CD8-positive, alpha-beta T cell (primary cell): ENCODE measurements at regions of chr1 and their contacts with region 1.

Region 1: GRCh38 chr1:223845810-223846682 is at the start of gene TP53BP2:
- DNase-seq: peak; percentile 66 to 93 (median 86)
- ATAC-seq: peak; percentile 83
- H3K4me3 ChIP-seq: peak within 1 kb of the TSS; percentile 77 to 87
- H3K4me3 Mint-ChIP-seq: peak within 1 kb of the TSS; percentile 93
- H3K27ac ChIP-seq: peak within 1 kb of the TSS; percentile 87 to 92
- H3K27ac Mint-ChIP-seq: peak within 1 kb of the TSS; percentile 95
- H3K4me1 ChIP-seq: peaks cover 28% of the 10 kb centered on the region
- H3K4me1 Mint-ChIP-seq: peaks cover 29% of the 10 kb centered on the region
- H3K27me3 ChIP-seq: no peaks in the 10 kb centered on the region
- H3K27me3 Mint-ChIP-seq: no peaks in the 10 kb centered on the region
- CTCF ChIP-seq: peak; percentile 33
- total RNA-seq, gene TP53BP2: 96.1 to 98.3 TPM

Region 2: DNA sequence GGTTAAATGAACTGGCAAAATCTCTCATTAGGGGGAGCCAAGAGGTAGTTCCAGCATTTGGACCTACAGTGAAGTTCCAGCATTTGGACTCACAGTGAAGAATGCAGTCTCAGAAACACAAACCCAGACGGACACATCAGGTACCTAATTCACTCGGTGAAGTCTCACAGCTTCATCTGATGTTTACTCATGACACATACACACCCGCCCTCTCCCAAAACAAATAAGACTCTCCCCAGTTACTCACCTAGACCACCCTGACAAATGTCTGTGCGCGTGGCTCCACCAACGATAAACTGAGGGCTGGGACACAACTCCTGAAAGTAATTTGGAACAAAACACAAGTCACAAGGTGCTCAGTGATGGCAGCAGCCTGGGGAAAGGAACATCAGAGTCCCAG is 192.0 kb before region 1 on chr1:
- CTCF ChIA-PET with region 1: no interaction called
- POLR2A ChIA-PET with region 1: no interaction called
- intact Hi-C with region 1: no loop called
- DNase-seq: no peak
- ATAC-seq: no peak
- H3K4me3 ChIP-seq: no peak overlapping the region
- H3K4me3 Mint-ChIP-seq: no peak overlapping the region
- H3K27ac ChIP-seq: no peak overlapping the region
- H3K27ac Mint-ChIP-seq: no peak overlapping the region
- H3K4me1 ChIP-seq: no peaks in the 10 kb centered on the region
- H3K4me1 Mint-ChIP-seq: no peaks in the 10 kb centered on the region
- H3K27me3 ChIP-seq: no peaks in the 10 kb centered on the region
- H3K27me3 Mint-ChIP-seq: peaks cover 20% of the 10 kb centered on the region
- CTCF ChIP-seq: no peak

Region 3: GRCh38 chr1:223670458-223671168 is 175.4 kb before region 1 on chr1:
- CTCF ChIA-PET with region 1: no interaction called
- POLR2A ChIA-PET with region 1: no interaction called
- intact Hi-C with region 1: no loop called
- DNase-seq: peak in 2 of 9 experiments; percentile 17 to 32
- ATAC-seq: no peak
- H3K4me3 ChIP-seq: no peak overlapping the region
- H3K4me3 Mint-ChIP-seq: no peak overlapping the region
- H3K27ac ChIP-seq: no peak overlapping the region
- H3K27ac Mint-ChIP-seq: no peak overlapping the region
- H3K4me1 ChIP-seq: no peaks in the 10 kb centered on the region
- H3K4me1 Mint-ChIP-seq: no peaks in the 10 kb centered on the region
- H3K27me3 ChIP-seq: no peaks in the 10 kb centered on the region
- H3K27me3 Mint-ChIP-seq: peaks cover 2% of the 10 kb centered on the region
- CTCF ChIP-seq: no peak

Region 4: DNA sequence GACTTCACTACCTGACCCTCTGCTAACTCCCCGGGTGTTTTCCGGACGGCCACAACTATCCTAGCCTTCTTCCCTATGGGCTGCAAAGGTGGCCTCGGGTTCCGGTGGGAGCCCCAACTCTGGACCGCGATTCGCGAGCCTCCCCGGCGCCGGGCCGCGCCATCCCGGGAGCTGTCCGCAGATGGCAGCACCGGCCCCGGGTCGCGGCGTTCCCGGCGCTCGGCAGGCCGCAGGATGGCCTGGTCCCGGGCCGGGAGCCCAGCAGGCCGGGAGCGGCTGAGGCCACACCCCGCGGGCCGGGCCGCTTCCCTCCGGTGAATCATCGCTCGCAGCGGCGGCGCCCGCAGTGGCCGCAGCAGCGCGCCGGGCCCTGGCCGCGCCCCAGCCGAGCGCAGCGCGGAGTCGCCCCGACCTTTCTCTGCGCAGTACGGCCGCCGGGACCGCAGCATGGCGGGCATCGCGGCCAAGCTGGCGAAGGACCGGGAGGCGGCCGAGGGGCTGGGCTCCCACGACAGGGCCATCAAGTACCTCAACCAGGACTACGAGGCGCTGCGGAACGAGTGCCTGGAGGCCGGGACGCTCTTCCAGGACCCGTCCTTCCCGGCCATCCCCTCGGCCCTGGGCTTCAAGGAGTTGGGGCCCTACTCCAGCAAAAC is 133.7 kb before region 1 on chr1 and contains the start of gene CAPN2:
- CTCF ChIA-PET with region 1: interaction called, 4 read pairs
- POLR2A ChIA-PET with region 1: interaction called, 4 read pairs
- intact Hi-C with region 1: loop called (anchors 5 kb)
- DNase-seq: peak; percentile 20 to 83 (median 58)
- ATAC-seq: peak; percentile 49
- H3K4me3 ChIP-seq: peak within 1 kb of the TSS; percentile 64 to 81
- H3K4me3 Mint-ChIP-seq: peak within 1 kb of the TSS; percentile 90
- H3K27ac ChIP-seq: peak within 1 kb of the TSS; percentile 62 to 85
- H3K27ac Mint-ChIP-seq: peak within 1 kb of the TSS; percentile 93
- H3K4me1 ChIP-seq: peaks cover 57% of the 10 kb centered on the region
- H3K4me1 Mint-ChIP-seq: peaks cover 56% of the 10 kb centered on the region
- H3K27me3 ChIP-seq: no peaks in the 10 kb centered on the region
- H3K27me3 Mint-ChIP-seq: no peaks in the 10 kb centered on the region
- CTCF ChIP-seq: peak; percentile 50
- total RNA-seq, gene CAPN2: 83.0 to 84.7 TPM

Region 5: GRCh38 chr1:223825767-223826748 is 20.0 kb before region 1 on chr1:
- CTCF ChIA-PET with region 1: interaction called, 5 read pairs
- POLR2A ChIA-PET with region 1: interaction called, 18 read pairs
- intact Hi-C with region 1: loop called in 1 of 2 experiments (anchors 2 kb)
- DNase-seq: peak in 1 of 9 experiments; percentile 24
- ATAC-seq: no peak
- H3K4me3 ChIP-seq: no peak overlapping the region
- H3K4me3 Mint-ChIP-seq: peak overlapping the region; percentile 22
- H3K27ac ChIP-seq: no peak overlapping the region
- H3K27ac Mint-ChIP-seq: peak overlapping the region; percentile 16
- H3K4me1 ChIP-seq: peaks cover 24% of the 10 kb centered on the region
- H3K4me1 Mint-ChIP-seq: peaks cover 59% of the 10 kb centered on the region
- H3K27me3 ChIP-seq: no peaks in the 10 kb centered on the region
- H3K27me3 Mint-ChIP-seq: no peaks in the 10 kb centered on the region
- CTCF ChIP-seq: no peak

Region 6: GRCh38 chr1:224014330-224014649 is 168.2 kb after region 1 on chr1:
- CTCF ChIA-PET with region 1: no interaction called
- POLR2A ChIA-PET with region 1: no interaction called
- intact Hi-C with region 1: no loop called
- DNase-seq: no peak
- ATAC-seq: no peak
- H3K4me3 ChIP-seq: no peak overlapping the region
- H3K4me3 Mint-ChIP-seq: no peak overlapping the region
- H3K27ac ChIP-seq: no peak overlapping the region
- H3K27ac Mint-ChIP-seq: no peak overlapping the region
- H3K4me1 ChIP-seq: no peaks in the 10 kb centered on the region
- H3K4me1 Mint-ChIP-seq: no peaks in the 10 kb centered on the region
- H3K27me3 ChIP-seq: no peaks in the 10 kb centered on the region
- H3K27me3 Mint-ChIP-seq: no peaks in the 10 kb centered on the region
- CTCF ChIP-seq: no peak

Region 7: GRCh38 chr1:224113918-224114786 is 268.1 kb after region 1 on chr1 and contains the start of gene FBXO28:
- CTCF ChIA-PET with region 1: no interaction called
- POLR2A ChIA-PET with region 1: no interaction called
- intact Hi-C with region 1: loop called in 1 of 2 experiments (anchors 2 kb)
- DNase-seq: peak; percentile 86 to 96 (median 94)
- ATAC-seq: peak; percentile 92
- H3K4me3 ChIP-seq: peak within 1 kb of the TSS; percentile 78 to 82
- H3K4me3 Mint-ChIP-seq: peak within 1 kb of the TSS; percentile 92
- H3K27ac ChIP-seq: peak within 1 kb of the TSS; percentile 94 to 97
- H3K27ac Mint-ChIP-seq: peak within 1 kb of the TSS; percentile 95
- H3K4me1 ChIP-seq: peaks cover 22% of the 10 kb centered on the region
- H3K4me1 Mint-ChIP-seq: peaks cover 34% of the 10 kb centered on the region
- H3K27me3 ChIP-seq: no peaks in the 10 kb centered on the region
- H3K27me3 Mint-ChIP-seq: peaks cover 12% of the 10 kb centered on the region
- CTCF ChIP-seq: no peak
- total RNA-seq, gene FBXO28: 43.4 to 44.2 TPM

Region 8: DNA sequence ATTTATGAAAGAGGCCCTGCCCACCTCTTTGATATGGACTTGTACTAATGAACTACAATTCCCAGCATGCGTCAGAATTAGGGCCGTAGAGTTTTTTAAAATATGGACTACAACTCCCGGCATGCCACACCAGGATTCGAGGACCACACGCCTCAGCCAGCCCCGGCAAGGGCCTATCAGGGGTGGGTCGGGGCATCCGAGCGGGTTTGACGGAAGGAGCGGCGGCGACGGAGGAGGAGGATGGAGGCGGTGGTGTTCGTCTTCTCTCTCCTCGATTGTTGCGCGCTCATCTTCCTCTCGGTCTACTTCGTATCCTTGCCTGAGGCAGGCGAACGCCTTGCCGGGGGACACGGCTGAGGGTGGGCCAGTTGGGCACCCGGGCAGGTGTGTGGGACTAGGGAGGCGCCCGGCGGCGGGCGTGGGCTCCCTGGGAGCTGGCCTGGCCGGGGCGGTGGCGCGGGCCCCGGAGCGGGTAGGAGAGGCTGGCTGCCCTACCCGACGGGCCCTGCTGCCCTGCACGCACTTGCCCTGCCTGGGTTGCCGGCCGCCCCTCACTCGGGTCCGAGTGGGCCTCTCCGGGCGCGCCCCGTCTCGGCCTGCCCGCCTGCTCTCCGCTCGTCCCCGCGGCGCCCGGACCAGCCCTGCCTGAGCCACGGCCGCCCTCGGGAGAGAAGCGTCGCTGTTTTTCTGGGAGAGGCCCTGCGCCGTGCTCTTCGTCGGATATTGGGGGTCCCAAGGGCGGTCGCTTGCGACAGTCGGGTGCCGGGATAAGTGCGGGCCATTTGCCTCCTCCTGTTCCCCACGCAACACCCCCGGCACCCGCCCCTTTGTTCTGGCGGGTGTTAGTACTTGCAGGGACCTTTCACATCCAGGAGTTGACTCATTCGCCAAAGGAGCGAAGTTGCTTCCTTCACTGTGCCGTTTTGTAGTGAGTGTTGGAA is 510.9 kb after region 1 on chr1 and contains the start of gene CNIH4:
- CTCF ChIA-PET with region 1: no interaction called
- POLR2A ChIA-PET with region 1: no interaction called
- intact Hi-C with region 1: loop called in 1 of 2 experiments (anchors 10 kb)
- DNase-seq: peak; percentile 81 to 97 (median 90)
- ATAC-seq: peak; percentile 99
- H3K4me3 ChIP-seq: peak within 1 kb of the TSS; percentile 60 to 78
- H3K4me3 Mint-ChIP-seq: peak within 1 kb of the TSS; percentile 87
- H3K27ac ChIP-seq: peak within 1 kb of the TSS; percentile 63 to 74
- H3K27ac Mint-ChIP-seq: peak within 1 kb of the TSS; percentile 92
- H3K4me1 ChIP-seq: peaks cover 33% of the 10 kb centered on the region
- H3K4me1 Mint-ChIP-seq: peaks cover 53% of the 10 kb centered on the region
- H3K27me3 ChIP-seq: no peaks in the 10 kb centered on the region
- H3K27me3 Mint-ChIP-seq: no peaks in the 10 kb centered on the region
- CTCF ChIP-seq: no peak
- total RNA-seq, gene CNIH4: 26.5 to 28.6 TPM